ENCODE measurements at regions of chr16 and their contacts with region 1.

Region 1: GRCh38 chr16:50024684-50025536 is at the start of gene CNEP1R1:
- DNase-seq: peak; percentile 93 to 95
- ATAC-seq: peak; percentile 100
- H3K4me3 ChIP-seq: peak within 1 kb of the TSS; percentile 91 to 98 (median 98)
- H3K27ac ChIP-seq: peak within 1 kb of the TSS; percentile 84 to 92 (median 88)
- H3K4me1 ChIP-seq: peaks cover 10 to 12% of the 10 kb centered on the region in 2 donors
- H3K27me3 ChIP-seq: no peaks in the 10 kb centered on the region
- CTCF ChIP-seq: peak; percentile 99 to 100 (median 100)
- POLR2A ChIP-seq: peak; percentile 43 to 55
- total RNA-seq, gene CNEP1R1: 11.7 to 24.9 (median 16.1) TPM

Region 2: GRCh38 chr16:50152807-50153452 is 128.0 kb after region 1 on chr16 and contains the start of gene TENT4B:
- in situ Hi-C with region 1: loop called in 1 of 4 experiments (anchors 10 kb)
- intact Hi-C with region 1: loop called (anchors 1 kb)
- DNase-seq: peak; percentile 75 to 76
- ATAC-seq: peak; percentile 91 to 93
- H3K4me3 ChIP-seq: peak within 1 kb of the TSS; percentile 84 to 97 (median 90)
- H3K27ac ChIP-seq: peak within 1 kb of the TSS; percentile 91 to 99 (median 96)
- H3K4me1 ChIP-seq: peaks cover 20 to 41% of the 10 kb centered on the region in 2 donors
- H3K27me3 ChIP-seq: no peaks in the 10 kb centered on the region
- CTCF ChIP-seq: no peak
- POLR2A ChIP-seq: peak; percentile 62 to 65
- total RNA-seq, gene TENT4B: 5.7 to 12.2 (median 7.0) TPM

Region 3: GRCh38 chr16:50210266-50211038 is 185.5 kb after region 1 on chr16:
- in situ Hi-C with region 1: loop called in 3 of 4 experiments (anchors 5 to 10 kb)
- intact Hi-C with region 1: loop called (anchors 2 kb)
- DNase-seq: peak; percentile 36 to 63
- ATAC-seq: peak; percentile 48 to 82
- H3K4me3 ChIP-seq: no peak overlapping the region
- H3K27ac ChIP-seq: peak overlapping the region; percentile 35 to 72 (median 50)
- H3K4me1 ChIP-seq: peaks cover 39 to 40% of the 10 kb centered on the region in 2 donors
- H3K27me3 ChIP-seq: no peaks in the 10 kb centered on the region
- CTCF ChIP-seq: peak; percentile 15 to 58 (median 39)
- POLR2A ChIP-seq: no peak

Region 4: GRCh38 chr16:50368410-50369132 is 343.7 kb after region 1 on chr16 and contains the start of gene BRD7:
- in situ Hi-C with region 1: loop called in 2 of 4 experiments (anchors 10 to 25 kb)
- intact Hi-C with region 1: no loop called
- DNase-seq: peak; percentile 17 to 50
- ATAC-seq: peak; percentile 92 to 94
- H3K4me3 ChIP-seq: peak within 1 kb of the TSS; percentile 67 to 98 (median 82)
- H3K27ac ChIP-seq: peak within 1 kb of the TSS; percentile 65 to 83 (median 76)
- H3K4me1 ChIP-seq: peaks cover 20 to 44% of the 10 kb centered on the region in 2 donors
- H3K27me3 ChIP-seq: no peaks in the 10 kb centered on the region
- CTCF ChIP-seq: peak in 4 of 5 experiments; percentile 35 to 83 (median 58)
- POLR2A ChIP-seq: peak in 1 of 2 donors; percentile 39
- total RNA-seq, gene BRD7: 38.3 to 55.9 (median 48.8) TPM

Region 5: GRCh38 chr16:50741808-50742575 is 717.1 kb after region 1 on chr16 and contains the start of gene CYLD:
- in situ Hi-C with region 1: no loop called
- intact Hi-C with region 1: loop called (anchors 5 kb)
- DNase-seq: peak; percentile 100
- ATAC-seq: peak; percentile 89 to 95
- H3K4me3 ChIP-seq: peak within 1 kb of the TSS; percentile 61 to 98 (median 90)
- H3K27ac ChIP-seq: peak within 1 kb of the TSS; percentile 85 to 99 (median 93)
- H3K4me1 ChIP-seq: peaks cover 29 to 40% of the 10 kb centered on the region in 2 donors
- H3K27me3 ChIP-seq: no peaks in the 10 kb centered on the region
- CTCF ChIP-seq: no peak
- POLR2A ChIP-seq: peak; percentile 88 to 97
- total RNA-seq, gene CYLD: 49.2 to 177 (median 135) TPM

Measured in gastrocnemius medialis (tissue), 4 donors.